Activated T-helper 2 cell treated with anti-CD3 and anti-CD28 coated beads, Interferon-gamma antibody, Interleukin-2, Interleukin-4, amounts not matched to agents 10 μg/mL and 5 μg/mL and 100 μg/mL, durations not matched to agents 14 hours and 24 hours and 36 hours (primary cell): ENCODE measurements at regions of chr4 and their contacts with region 1.

Region 1: GRCh38 chr4:94304365-94304971 is 38.2 kb downstream of the HPGDS start:
- DNase-seq: no peak
- H3K4me3 Mint-ChIP-seq: no peak overlapping the region
- H3K27ac Mint-ChIP-seq: no peak overlapping the region
- H3K4me1 Mint-ChIP-seq: peaks cover 14% of the 10 kb centered on the region
- H3K27me3 Mint-ChIP-seq: peaks cover 1% of the 10 kb centered on the region

Region 2: DNA sequence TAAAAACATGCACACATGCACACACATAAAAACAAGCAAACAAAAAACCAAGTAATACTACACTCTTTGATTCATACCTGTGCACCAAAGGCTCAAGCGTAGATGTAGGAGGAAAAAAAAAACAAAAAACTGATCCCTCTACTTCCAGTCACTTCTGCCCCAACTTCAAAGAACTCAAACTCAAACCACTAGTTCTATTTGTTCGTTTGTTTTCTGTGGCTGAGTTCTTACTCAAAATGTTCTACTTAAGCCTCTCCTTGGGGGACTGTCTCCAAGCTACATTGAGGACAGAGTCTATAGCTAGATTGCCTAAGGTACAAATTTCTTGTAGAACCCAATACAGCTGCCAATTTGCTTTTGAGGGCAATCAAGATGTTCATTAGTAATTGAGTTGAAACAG is 646.9 kb before region 1 on chr4:
- intact Hi-C with region 1: no loop called
- DNase-seq: no peak
- H3K4me3 Mint-ChIP-seq: no peak overlapping the region
- H3K27ac Mint-ChIP-seq: no peak overlapping the region
- H3K4me1 Mint-ChIP-seq: no peaks in the 10 kb centered on the region
- H3K27me3 Mint-ChIP-seq: no peaks in the 10 kb centered on the region

Region 3: DNA sequence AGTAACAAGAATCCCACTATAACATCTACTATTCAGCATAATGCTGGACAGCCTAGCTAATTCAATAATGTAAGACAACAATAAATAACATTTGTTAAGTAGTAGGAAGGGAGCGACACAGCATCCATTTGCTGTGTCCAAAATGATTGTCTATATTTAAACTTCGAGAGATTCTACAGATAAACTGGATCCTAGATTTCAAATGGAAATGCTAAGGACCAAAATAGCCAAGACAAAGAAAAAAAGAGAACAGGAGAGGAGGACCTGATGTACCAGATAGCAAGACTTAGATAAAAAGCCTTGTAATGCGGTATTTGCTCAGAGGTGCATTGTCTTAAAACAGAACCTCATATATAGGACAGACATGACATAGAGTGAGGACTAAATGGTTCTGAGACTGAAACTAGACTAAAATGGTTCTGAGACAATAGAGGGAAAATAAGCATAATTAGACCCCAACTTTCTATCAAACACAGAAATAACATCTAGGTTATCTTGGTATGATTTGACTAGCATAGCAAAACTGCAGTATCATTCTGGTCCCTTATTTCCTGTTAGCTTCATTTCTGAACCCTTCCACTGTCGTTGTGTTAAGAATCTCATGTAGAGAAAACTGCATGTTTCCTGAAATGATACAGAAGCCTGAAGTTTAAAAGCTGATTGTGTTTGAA is 34.3 kb after region 1 on chr4:
- intact Hi-C with region 1: loop called (anchors 5 kb)
- DNase-seq: no peak
- H3K4me3 Mint-ChIP-seq: peak overlapping the region; percentile 52
- H3K27ac Mint-ChIP-seq: peak overlapping the region; percentile 91
- H3K4me1 Mint-ChIP-seq: peaks cover 30% of the 10 kb centered on the region
- H3K27me3 Mint-ChIP-seq: peaks cover 4% of the 10 kb centered on the region

Region 4: GRCh38 chr4:94390804-94391410 is 86.4 kb after region 1 on chr4:
- intact Hi-C with region 1: loop called (anchors 1 kb)
- DNase-seq: no peak
- H3K4me3 Mint-ChIP-seq: no peak overlapping the region
- H3K27ac Mint-ChIP-seq: no peak overlapping the region
- H3K4me1 Mint-ChIP-seq: peaks cover 4% of the 10 kb centered on the region
- H3K27me3 Mint-ChIP-seq: peaks cover 27% of the 10 kb centered on the region

Region 5: DNA sequence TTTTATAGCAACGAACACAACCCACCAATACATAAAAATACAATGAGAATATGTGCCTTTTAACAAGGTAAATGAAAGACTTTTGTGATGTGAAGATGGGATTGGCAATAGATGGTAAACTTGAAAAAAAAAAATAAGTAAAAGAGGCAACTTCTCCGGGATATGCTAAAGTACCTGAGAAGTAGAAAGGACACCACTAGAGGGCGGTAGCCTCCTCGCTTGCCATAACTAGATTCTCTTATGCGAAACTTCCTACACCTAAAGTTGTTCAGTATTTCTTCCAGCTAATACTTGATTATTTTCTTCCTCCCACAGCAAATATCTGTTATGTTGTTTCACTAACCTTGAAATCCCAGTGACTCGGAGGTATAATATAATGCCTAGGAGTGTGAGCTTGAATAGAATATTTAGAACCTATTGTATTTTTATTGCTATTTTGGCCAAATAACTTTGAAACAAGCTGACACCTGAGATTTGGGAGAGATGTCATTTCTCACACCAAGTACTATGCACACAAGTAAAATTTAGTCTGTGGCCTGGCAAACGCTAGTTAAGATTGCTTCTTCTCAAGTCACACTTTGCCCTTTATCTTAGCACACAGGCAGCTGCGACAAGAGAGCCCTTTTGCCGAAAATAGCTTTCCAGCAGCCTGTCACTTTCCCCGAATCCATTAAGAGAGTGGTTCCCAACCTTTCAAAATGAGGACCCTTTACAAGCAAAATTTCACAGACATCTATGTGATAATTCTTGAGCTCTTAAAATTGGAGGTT is 102.4 kb after region 1 on chr4:
- intact Hi-C with region 1: loop called (anchors 5 kb)
- DNase-seq: peak; percentile 18
- H3K4me3 Mint-ChIP-seq: no peak overlapping the region
- H3K27ac Mint-ChIP-seq: no peak overlapping the region
- H3K4me1 Mint-ChIP-seq: peaks cover 2% of the 10 kb centered on the region
- H3K27me3 Mint-ChIP-seq: peaks cover 35% of the 10 kb centered on the region

Region 6: DNA sequence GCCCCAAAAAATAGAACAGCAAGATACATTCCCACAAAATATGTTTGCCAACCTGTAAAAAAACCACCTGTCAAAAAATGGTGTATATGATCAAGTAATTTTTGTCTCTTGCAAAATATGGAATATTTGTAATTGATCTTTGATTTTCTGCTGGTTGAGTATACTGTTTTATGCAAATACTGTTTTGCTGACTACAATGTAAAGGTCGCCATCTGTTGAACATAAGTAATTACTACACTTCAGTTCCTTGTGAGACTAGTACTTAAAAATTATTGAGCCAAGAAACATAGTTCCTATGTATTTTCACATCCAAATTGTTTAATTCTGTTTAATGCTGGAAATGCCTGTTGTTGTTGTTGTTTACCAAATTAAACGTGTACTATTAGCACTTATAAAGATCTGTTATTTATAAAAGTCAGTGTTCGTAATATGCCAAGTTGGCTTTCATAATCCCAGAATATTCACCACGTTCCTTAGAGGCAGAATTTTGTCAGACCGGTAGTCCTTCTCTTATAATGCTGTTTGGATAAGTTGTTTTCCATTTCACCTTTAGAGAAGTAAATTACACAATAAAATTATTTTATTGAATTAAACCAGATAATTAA is 291.5 kb after region 1 on chr4:
- intact Hi-C with region 1: loop called (anchors 1 kb)
- DNase-seq: no peak
- H3K4me3 Mint-ChIP-seq: no peak overlapping the region
- H3K27ac Mint-ChIP-seq: no peak overlapping the region
- H3K4me1 Mint-ChIP-seq: no peaks in the 10 kb centered on the region
- H3K27me3 Mint-ChIP-seq: no peaks in the 10 kb centered on the region